WTC11 (cell line): ENCODE measurements at regions of chr9 and their contacts with region 1.

Region 1: GRCh38 chr9:93183609-93184431 is at the start of gene WNK2:
- DNase-seq: peak; percentile 55
- ATAC-seq: peak; percentile 67
- H3K4me3 Mint-ChIP-seq: peak within 1 kb of the TSS; percentile 71
- H3K27ac Mint-ChIP-seq: no peak within 1 kb of the TSS
- H3K4me1 Mint-ChIP-seq: peaks cover 29% of the 10 kb centered on the region
- H3K27me3 Mint-ChIP-seq: peaks cover 31% of the 10 kb centered on the region
- CTCF ChIP-seq: no peak
- total RNA-seq, gene WNK2: 113 to 121 TPM (median 120 TPM) in 3 replicates

Region 2: GRCh38 chr9:93159601-93160471 is 24.0 kb before region 1 on chr9:
- CTCF ChIA-PET with region 1: interaction called, 15 read pairs
- POLR2A ChIA-PET with region 1: no interaction called
- DNase-seq: peak; percentile 96
- ATAC-seq: peak; percentile 99
- H3K4me3 Mint-ChIP-seq: no peak overlapping the region
- H3K27ac Mint-ChIP-seq: no peak overlapping the region
- H3K4me1 Mint-ChIP-seq: no peaks in the 10 kb centered on the region
- H3K27me3 Mint-ChIP-seq: peaks cover 3% of the 10 kb centered on the region; the same call in 1 of the 2 replicates
- CTCF ChIP-seq: peak; percentile 91